ENCODE measurements at regions of chr15 and their contacts with region 1.

Region 1: DNA sequence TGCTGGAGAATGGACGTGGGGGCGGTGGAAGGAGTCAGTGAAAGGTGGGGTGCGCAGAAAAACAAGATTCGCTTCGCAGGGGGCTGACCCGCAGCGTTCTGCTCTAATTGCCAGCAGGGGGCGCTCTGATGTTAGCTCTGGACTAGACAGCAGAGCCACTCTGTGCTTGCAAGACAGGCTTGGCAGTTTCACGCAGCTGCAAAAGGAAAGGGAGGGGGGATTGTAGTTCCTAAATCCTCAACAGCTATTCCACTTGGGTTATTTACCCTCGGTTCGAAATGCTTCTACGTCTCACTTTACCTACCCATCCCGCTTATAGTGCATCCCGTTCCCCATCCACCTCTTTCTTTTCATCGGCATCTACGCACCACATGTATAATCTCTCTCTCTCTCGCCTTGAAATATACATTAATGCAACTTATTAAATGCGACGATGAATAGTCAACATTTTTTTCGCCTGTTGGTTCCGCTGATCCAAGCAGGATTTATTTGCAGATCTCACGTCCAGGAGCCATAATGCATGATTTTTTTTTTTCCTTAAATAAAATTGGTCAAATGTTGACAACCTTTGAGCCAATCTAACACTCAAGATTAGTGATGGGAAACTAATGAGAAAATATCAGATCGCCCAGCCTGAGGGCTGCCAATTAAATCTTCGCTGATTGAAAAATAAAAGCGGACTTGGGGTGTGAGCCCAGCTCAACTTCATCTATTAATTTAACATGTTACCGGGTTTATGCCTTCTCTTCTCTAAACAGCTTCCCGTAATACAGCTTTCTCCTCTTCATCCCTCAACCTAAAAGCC is 216.4 kb downstream of the MEIS2 start:
- DNase-seq: peak; percentile 89
- ATAC-seq: peak; percentile 92
- H3K4me3 ChIP-seq: no peak overlapping the region
- H3K27ac ChIP-seq: no peak overlapping the region
- H3K4me1 ChIP-seq: peaks cover 7% of the 10 kb centered on the region
- H3K27me3 ChIP-seq: peaks cover 96% of the 10 kb centered on the region
- CTCF ChIP-seq: peak; percentile 85

Region 2: GRCh38 chr15:37134699-37135131 is 250.8 kb after region 1 on chr15:
- intact Hi-C with region 1: loop called (anchors 10 kb)
- DNase-seq: no peak
- ATAC-seq: peak; percentile 75
- H3K4me3 ChIP-seq: no peak overlapping the region
- H3K27ac ChIP-seq: no peak overlapping the region
- H3K4me1 ChIP-seq: no peaks in the 10 kb centered on the region
- H3K27me3 ChIP-seq: peaks cover 6% of the 10 kb centered on the region
- CTCF ChIP-seq: peak; percentile 77

Measured in upper lobe of right lung (tissue), 1 donor.